ENCODE measurements at regions of chr15 and their contacts with region 1.

Region 1: DNA sequence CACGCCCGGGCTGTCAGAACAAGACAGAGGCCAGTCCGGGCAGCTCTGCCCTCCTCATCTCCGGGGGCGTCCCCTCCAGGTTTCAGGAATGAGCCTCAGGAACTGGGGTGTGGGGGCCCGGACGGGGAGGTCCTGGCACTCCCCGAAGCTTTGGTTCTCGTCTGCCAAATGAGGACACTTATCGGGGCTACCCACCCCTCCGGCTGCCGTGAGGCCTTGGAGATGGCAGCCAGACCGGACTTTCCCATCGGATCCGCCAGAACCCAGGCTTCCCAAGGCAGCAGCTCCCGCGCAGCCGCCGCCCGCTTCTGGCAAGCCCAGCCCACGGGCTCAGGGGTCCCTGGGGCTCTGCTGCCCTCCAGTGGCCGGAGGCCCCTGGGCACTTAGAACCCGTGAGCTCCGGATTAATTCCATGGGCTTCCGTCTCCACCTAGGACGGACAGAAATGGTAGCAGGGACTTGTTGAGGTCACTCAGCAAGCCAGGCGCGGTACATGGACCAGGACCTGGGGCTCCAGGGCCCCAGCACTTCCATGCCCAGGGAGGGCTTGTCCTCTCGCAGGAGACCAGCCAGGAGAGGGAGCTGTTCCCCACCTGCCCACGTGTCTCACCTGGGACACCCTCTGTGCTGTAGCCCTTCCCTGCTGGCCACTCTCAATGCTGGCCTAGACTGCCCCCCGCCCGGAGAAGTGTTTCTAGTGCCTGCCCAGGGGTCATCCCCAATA is 89.4 kb downstream of the LINGO1 start:
- DNase-seq: peak; percentile 73
- ATAC-seq: peak; percentile 91
- H3K4me3 ChIP-seq: peak overlapping the region; percentile 51 to 75 (median 52)
- H3K27ac ChIP-seq: no peak overlapping the region
- H3K4me1 ChIP-seq: peaks cover 23% of the 10 kb centered on the region
- H3K27me3 ChIP-seq: peaks cover 6 to 13% of the 10 kb centered on the region in 2 experiments; a peak in 3 of 5 replicates
- CTCF ChIP-seq: peak; percentile 98
- EP300 ChIP-seq: no peak
- POLR2A ChIP-seq: no peak
- RAD21 ChIP-seq: peak; percentile 99

Region 2: GRCh38 chr15:77118882-77119321 is 424.4 kb before region 1 on chr15:
- CTCF ChIA-PET with region 1: interaction called, 11 read pairs
- POLR2A ChIA-PET with region 1: no interaction called
- in situ Hi-C with region 1: no loop called
- intact Hi-C with region 1: loop called (anchors 5 kb)
- DNase-seq: peak; percentile 59
- ATAC-seq: peak; percentile 62; the same call in 2 of the 3 replicates
- H3K4me3 ChIP-seq: no peak overlapping the region
- H3K27ac ChIP-seq: no peak overlapping the region
- H3K4me1 ChIP-seq: 0 out of 2 replicates have a peak, but pooled peaks cover 5% of the 10 kb centered on the region
- H3K27me3 ChIP-seq: no peaks in the 10 kb centered on the region
- CTCF ChIP-seq: peak; percentile 75
- EP300 ChIP-seq: no peak
- POLR2A ChIP-seq: no peak
- RAD21 ChIP-seq: peak; percentile 59; the same call in 1 of the 2 replicates

Region 3: GRCh38 chr15:77496710-77497103 is 46.6 kb before region 1 on chr15:
- CTCF ChIA-PET with region 1: interaction called, 8 read pairs
- POLR2A ChIA-PET with region 1: no interaction called
- in situ Hi-C with region 1: loop called (anchors 5 kb)
- intact Hi-C with region 1: loop called (anchors 2 kb)
- DNase-seq: peak; percentile 68
- ATAC-seq: peak; percentile 93
- H3K4me3 ChIP-seq: peak overlapping the region; percentile 24 to 61 (median 47); a peak in 4 of 6 replicates
- H3K27ac ChIP-seq: no peak overlapping the region
- H3K4me1 ChIP-seq: peaks cover 27% of the 10 kb centered on the region
- H3K27me3 ChIP-seq: no peaks in the 10 kb centered on the region
- CTCF ChIP-seq: peak; percentile 96
- EP300 ChIP-seq: no peak
- POLR2A ChIP-seq: no peak
- RAD21 ChIP-seq: peak; percentile 91

Region 4: GRCh38 chr15:77526791-77527778 is 16.2 kb before region 1 on chr15:
- CTCF ChIA-PET with region 1: no interaction called
- POLR2A ChIA-PET with region 1: interaction called, 11 read pairs
- in situ Hi-C with region 1: no loop called
- intact Hi-C with region 1: no loop called
- DNase-seq: peak; percentile 70
- ATAC-seq: peak; percentile 87
- H3K4me3 ChIP-seq: peak overlapping the region; percentile 35 to 57 (median 42); a peak in 5 of 6 replicates
- H3K27ac ChIP-seq: peak overlapping the region; percentile 46
- H3K4me1 ChIP-seq: peaks cover 59% of the 10 kb centered on the region
- H3K27me3 ChIP-seq: no peaks in the 10 kb centered on the region
- CTCF ChIP-seq: peak; percentile 11; the same call in 1 of the 2 replicates
- EP300 ChIP-seq: no peak
- POLR2A ChIP-seq: peak; percentile 21 to 33; a peak in 1 of 4 replicates
- RAD21 ChIP-seq: no peak